HCT116 (cell line): ENCODE measurements at regions of chr9 and their contacts with region 1.

Region 1: GRCh38 chr9:35116898-35117551 is 1.4 kb upstream of the ATOSB start:
- DNase-seq: peak; percentile 86
- ATAC-seq: peak; percentile 69
- H3K4me3 ChIP-seq: peak overlapping the region; percentile 58 to 68
- H3K27ac ChIP-seq: no peak overlapping the region
- H3K4me1 ChIP-seq: peaks cover 32 to 50% of the 10 kb centered on the region in 2 experiments
- H3K27me3 ChIP-seq: no peaks in the 10 kb centered on the region
- CTCF ChIP-seq: peak in 2 of 3 experiments; percentile 92 to 95; a peak in 4 of 6 replicates
- POLR2A ChIP-seq: no peak
- RAD21 ChIP-seq: no peak

Region 2: DNA sequence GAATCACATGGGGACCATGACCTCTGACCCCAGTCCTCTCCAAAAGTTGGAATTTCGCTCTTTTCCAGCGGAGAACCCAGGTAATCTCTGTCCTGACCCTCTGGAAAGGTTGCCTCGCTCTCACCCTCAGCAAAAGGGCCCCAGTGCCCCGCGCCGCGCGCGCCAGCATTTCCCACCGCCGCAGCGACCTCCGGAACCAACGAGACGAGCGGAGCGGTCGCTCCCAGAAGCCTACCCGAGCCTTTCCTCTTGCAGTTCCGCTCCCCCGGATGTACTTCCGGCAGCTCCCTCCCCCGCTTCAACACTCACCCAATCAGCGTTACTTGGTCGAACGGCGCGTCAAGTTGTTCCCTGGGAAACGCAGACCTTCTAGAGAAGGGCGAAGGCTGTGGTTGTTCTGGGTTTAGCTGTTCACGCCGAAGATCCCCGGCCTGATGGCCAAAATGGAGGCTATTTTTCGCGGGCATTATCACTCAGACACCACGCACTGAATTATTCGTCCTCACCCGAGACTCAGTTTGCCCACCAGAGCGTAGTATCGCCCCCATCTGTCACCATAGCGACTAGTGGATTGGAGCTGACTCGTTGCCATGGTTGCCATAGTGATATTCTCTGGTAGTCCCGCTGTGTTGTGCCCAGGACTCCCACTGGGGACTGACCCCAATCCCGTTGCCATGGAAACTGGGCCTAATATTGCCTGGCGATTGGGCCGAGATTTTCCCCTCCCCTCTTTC is 13.9 kb before region 1 on chr9 and contains the start of gene STOML2:
- CTCF ChIA-PET with region 1: interaction called, 10 read pairs
- POLR2A ChIA-PET with region 1: interaction called, 11 read pairs
- RAD21 ChIA-PET with region 1: no interaction called
- intact Hi-C with region 1: no loop called
- DNase-seq: peak; percentile 93
- ATAC-seq: peak; percentile 97
- H3K4me3 ChIP-seq: peak within 1 kb of the TSS; percentile 87 to 88
- H3K27ac ChIP-seq: peak within 1 kb of the TSS; percentile 76
- H3K4me1 ChIP-seq: peaks cover 9 to 22% of the 10 kb centered on the region in 2 experiments
- H3K27me3 ChIP-seq: no peaks in the 10 kb centered on the region
- CTCF ChIP-seq: no peak
- POLR2A ChIP-seq: peak; percentile 70
- RAD21 ChIP-seq: no peak
- total RNA-seq, gene STOML2: 245 TPM

Region 3: DNA sequence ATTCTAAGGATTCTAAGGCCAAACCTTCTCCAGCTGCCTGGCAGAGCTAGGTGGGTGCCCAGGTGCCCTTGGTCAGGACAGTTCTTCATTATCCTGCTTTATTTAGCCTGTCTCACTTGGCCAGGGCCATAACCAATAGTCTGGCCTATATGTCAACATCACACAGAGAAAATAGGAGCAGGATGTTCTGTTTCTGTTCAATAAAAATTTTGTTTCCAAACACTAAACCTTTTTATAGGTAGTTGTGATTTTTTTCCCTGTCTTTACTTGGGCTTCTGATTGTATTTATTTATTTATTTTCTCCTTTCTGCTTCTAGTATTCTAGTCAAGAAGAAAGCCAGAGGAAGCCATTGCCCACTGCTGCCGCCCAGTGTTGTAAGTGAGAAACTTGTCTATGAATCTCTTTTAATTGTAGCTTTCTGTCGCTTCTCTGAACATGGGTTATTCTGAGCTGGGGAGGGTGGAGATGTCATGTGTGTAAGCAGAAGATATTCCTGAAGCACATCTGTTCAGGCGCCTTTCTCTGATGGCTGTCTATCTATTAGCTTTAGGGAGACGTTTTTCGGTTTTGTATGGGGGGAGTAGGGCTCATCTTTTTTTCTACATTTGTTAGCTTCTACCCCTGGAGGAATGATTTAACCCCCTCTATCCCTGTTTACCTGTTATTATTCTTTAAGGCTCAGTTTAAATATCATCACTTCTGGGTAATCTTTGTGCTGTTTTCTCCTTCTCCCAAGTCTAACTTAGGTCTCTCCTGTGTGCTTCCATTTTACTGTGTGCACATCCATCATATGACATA is 141.8 kb after region 1 on chr9:
- CTCF ChIA-PET with region 1: interaction called, 22 read pairs
- POLR2A ChIA-PET with region 1: interaction called, 4 read pairs
- RAD21 ChIA-PET with region 1: interaction called, 3 to 7 read pairs
- intact Hi-C with region 1: loop called (anchors 1 kb)
- DNase-seq: peak; percentile 31
- ATAC-seq: peak; percentile 76
- H3K4me3 ChIP-seq: no peak overlapping the region
- H3K27ac ChIP-seq: no peak overlapping the region
- H3K4me1 ChIP-seq: 0 out of 4 replicates have a peak, but pooled peaks cover 0 to 2% of the 10 kb centered on the region in 2 experiments
- H3K27me3 ChIP-seq: no peaks in the 10 kb centered on the region
- CTCF ChIP-seq: peak; percentile 47 to 66 (median 63); a peak in 5 of 6 replicates
- POLR2A ChIP-seq: no peak
- RAD21 ChIP-seq: peak; percentile 63

Region 4: GRCh38 chr9:35452481-35452880 is 335.5 kb after region 1 on chr9:
- CTCF ChIA-PET with region 1: no interaction called
- POLR2A ChIA-PET with region 1: no interaction called
- RAD21 ChIA-PET with region 1: no interaction called
- intact Hi-C with region 1: loop called (anchors 5 kb)
- DNase-seq: no peak
- ATAC-seq: peak; percentile 68; the same call in 1 of the 2 replicates
- H3K4me3 ChIP-seq: no peak overlapping the region
- H3K27ac ChIP-seq: no peak overlapping the region
- H3K4me1 ChIP-seq: peaks cover 0 to 11% of the 10 kb centered on the region in 2 experiments; a peak in 1 of 4 replicates
- H3K27me3 ChIP-seq: peaks cover 21% of the 10 kb centered on the region
- CTCF ChIP-seq: peak in 2 of 3 experiments; percentile 21 to 38; a peak in 3 of 6 replicates
- POLR2A ChIP-seq: no peak
- RAD21 ChIP-seq: 0 out of 2 replicates have a peak, but pooled peaks have one; percentile 20

Region 5: GRCh38 chr9:35510745-35511428 is 393.9 kb after region 1 on chr9:
- CTCF ChIA-PET with region 1: no interaction called
- POLR2A ChIA-PET with region 1: no interaction called
- RAD21 ChIA-PET with region 1: no interaction called
- intact Hi-C with region 1: no loop called
- DNase-seq: peak; percentile 73
- ATAC-seq: peak; percentile 92
- H3K4me3 ChIP-seq: peak overlapping the region; percentile 1 to 21; a peak in 3 of 4 replicates
- H3K27ac ChIP-seq: peak overlapping the region; percentile 75
- H3K4me1 ChIP-seq: peaks cover 33 to 47% of the 10 kb centered on the region in 2 experiments
- H3K27me3 ChIP-seq: no peaks in the 10 kb centered on the region
- CTCF ChIP-seq: 0 out of 6 replicates have a peak, but pooled peaks of 2 of the 3 experiments have one; percentile 18 to 19
- POLR2A ChIP-seq: no peak
- RAD21 ChIP-seq: peak; percentile 32; the same call in 1 of the 2 replicates

Region 6: GRCh38 chr9:35553670-35554543 is 436.9 kb after region 1 on chr9:
- CTCF ChIA-PET with region 1: interaction called, 4 read pairs
- POLR2A ChIA-PET with region 1: no interaction called
- RAD21 ChIA-PET with region 1: no interaction called
- intact Hi-C with region 1: loop called (anchors 1 kb)
- DNase-seq: peak; percentile 37
- ATAC-seq: peak; percentile 97
- H3K4me3 ChIP-seq: no peak overlapping the region
- H3K27ac ChIP-seq: no peak overlapping the region
- H3K4me1 ChIP-seq: no peaks in the 10 kb centered on the region; a peak in 1 of 4 replicates
- H3K27me3 ChIP-seq: no peaks in the 10 kb centered on the region
- CTCF ChIP-seq: peak; percentile 74 to 96 (median 95)
- POLR2A ChIP-seq: no peak
- RAD21 ChIP-seq: peak; percentile 99